HEK293T (cell line): ENCODE measurements at regions of chr1 and their contacts with region 1.

Region 1: GRCh38 chr1:184664042-184664655 is 90.5 kb downstream of the EDEM3 start:
- DNase-seq: peak; percentile 92

Region 2: GRCh38 chr1:184379111-184379946 is 284.8 kb before region 1 on chr1:
- CTCF ChIA-PET with region 1: interaction called, 31 read pairs
- POLR2A ChIA-PET with region 1: no interaction called
- DNase-seq: no peak

Region 3: DNA sequence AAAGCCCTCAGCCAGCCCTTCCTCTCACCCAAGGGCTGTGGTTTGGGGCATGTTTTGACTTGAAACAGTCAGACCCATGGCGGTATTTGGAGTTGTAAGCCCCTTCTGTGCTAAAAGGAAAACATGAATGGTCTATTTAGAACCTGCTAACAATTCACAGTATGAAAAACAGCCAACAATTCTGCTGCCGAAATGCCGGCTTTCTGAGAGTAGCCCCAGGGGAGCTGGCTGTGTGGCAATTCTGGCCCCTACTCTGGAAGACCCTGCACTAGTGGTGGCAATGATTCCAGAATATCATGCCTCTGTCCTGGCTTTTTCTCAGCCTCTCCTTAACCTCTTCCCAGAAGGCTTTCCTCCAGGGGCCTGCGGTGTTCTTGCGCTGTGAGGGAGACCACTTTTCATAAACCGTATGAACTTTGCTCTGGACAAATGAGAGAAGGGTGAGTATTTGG is 28.1 kb before region 1 on chr1:
- CTCF ChIA-PET with region 1: no interaction called
- POLR2A ChIA-PET with region 1: no interaction called
- DNase-seq: no peak

Region 4: GRCh38 chr1:184754476-184755225 is 90.5 kb after region 1 on chr1 and contains the start of gene EDEM3:
- CTCF ChIA-PET with region 1: no interaction called
- POLR2A ChIA-PET with region 1: no interaction called
- DNase-seq: peak; percentile 99

Region 5: GRCh38 chr1:184854496-184855140 is 190.5 kb after region 1 on chr1:
- CTCF ChIA-PET with region 1: no interaction called
- POLR2A ChIA-PET with region 1: no interaction called
- DNase-seq: no peak